Ovary (tissue), 10 donors: ENCODE measurements at regions of chr10 and their contacts with region 1.

Region 1: DNA sequence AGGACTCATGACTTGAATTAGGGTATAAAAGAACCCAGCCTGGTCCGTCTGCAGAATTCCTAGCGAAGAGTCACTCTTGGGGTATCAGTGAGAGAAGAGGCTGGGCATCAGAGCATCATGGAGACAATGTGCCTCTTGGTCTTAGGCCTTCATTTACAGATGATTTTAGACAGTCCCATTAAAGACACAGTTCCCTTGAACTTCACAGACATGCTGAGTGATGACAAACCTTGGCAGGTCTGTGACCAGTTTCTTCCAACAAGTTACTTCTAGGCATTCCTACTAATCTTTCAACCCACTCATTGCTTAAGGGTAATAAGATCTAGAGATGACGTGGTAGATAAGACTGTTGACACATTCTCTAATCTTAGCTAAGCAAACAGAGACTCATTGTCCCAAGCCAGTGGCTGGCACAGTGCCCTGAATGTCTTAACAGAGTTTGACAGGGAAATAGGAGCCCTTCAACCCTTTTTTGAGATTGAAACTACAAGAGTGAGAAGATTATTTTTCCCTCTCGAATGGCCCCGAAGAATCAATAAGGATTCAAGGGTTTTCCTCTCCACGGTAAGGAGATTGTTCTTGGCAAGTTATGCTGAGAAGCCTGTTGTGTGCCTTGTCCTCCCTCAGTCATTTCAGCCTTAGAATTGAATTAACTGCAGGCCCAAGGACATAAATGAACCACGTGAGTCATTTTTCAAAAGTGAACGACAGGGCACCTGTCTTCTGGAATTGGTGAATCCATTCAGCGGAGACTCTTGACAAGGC is 281.1 kb downstream of the CCDC3 start:
- DNase-seq: peak in 1 of 5 donors; percentile 39
- H3K4me3 ChIP-seq: no peak overlapping the region
- H3K27ac ChIP-seq: no peak overlapping the region
- H3K4me1 ChIP-seq: no peaks in the 10 kb centered on the region
- H3K27me3 ChIP-seq: no peaks in the 10 kb centered on the region
- CTCF ChIP-seq: no peak
- EP300 ChIP-seq: no peak
- POLR2A ChIP-seq: no peak

Region 2: GRCh38 chr10:13074561-13075451 is 354.4 kb after region 1 on chr10:
- intact Hi-C with region 1: loop called in 2 of 4 experiments (anchors 5 to 10 kb)
- DNase-seq: peak; percentile 63 to 77 (median 76)
- H3K4me3 ChIP-seq: no peak overlapping the region
- H3K27ac ChIP-seq: no peak overlapping the region
- H3K4me1 ChIP-seq: no peaks in the 10 kb centered on the region
- H3K27me3 ChIP-seq: no peaks in the 10 kb centered on the region
- CTCF ChIP-seq: peak; percentile 69 to 79 (median 71)
- EP300 ChIP-seq: no peak
- POLR2A ChIP-seq: no peak